ENCODE measurements at regions of chr4 and their contacts with region 1.

Region 1: GRCh38 chr4:98110929-98111328 is 32.3 kb downstream of the STPG2 start:
- DNase-seq: no peak
- H3K4me3 ChIP-seq: no peak overlapping the region
- H3K27ac ChIP-seq: no peak overlapping the region
- H3K4me1 ChIP-seq: no peaks in the 10 kb centered on the region
- H3K27me3 ChIP-seq: no peaks in the 10 kb centered on the region
- CTCF ChIP-seq: no peak
- EP300 ChIP-seq: no peak
- POLR2A ChIP-seq: no peak

Region 2: GRCh38 chr4:98125585-98125984 is 14.7 kb after region 1 on chr4:
- intact Hi-C with region 1: loop called in 1 of 4 experiments (anchors 1 kb)
- DNase-seq: no peak
- H3K4me3 ChIP-seq: no peak overlapping the region
- H3K27ac ChIP-seq: no peak overlapping the region
- H3K4me1 ChIP-seq: no peaks in the 10 kb centered on the region
- H3K27me3 ChIP-seq: no peaks in the 10 kb centered on the region
- CTCF ChIP-seq: no peak
- EP300 ChIP-seq: no peak
- POLR2A ChIP-seq: no peak

Measured in ovary (tissue), 10 donors.